Breast epithelium (tissue), 4 donors: ENCODE measurements at regions of chr1 and their contacts with region 1.

Region 1: DNA sequence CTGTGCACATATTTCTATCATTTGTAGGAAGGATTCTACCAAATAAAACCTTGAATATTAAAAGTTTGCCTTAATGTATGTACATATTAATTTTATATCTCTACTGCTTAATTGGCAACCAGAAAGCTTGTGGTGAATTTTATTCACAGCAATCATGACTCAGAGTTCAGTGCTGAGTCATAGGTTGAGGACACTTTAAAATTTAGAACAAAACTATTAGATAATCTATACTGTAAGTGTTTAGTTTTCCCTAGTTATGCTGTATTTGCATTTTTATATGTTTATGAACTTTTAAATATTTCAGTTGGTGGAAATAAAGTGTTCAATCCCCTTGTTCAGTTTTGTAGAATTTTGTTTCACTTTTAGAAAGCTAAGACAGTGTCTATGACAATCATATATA is 841.5 kb downstream of the KCNT2 start:
- DNase-seq: no peak
- H3K4me3 ChIP-seq: no peak overlapping the region
- H3K27ac ChIP-seq: no peak overlapping the region
- H3K4me1 ChIP-seq: no peaks in the 10 kb centered on the region
- H3K27me3 ChIP-seq: no peaks in the 10 kb centered on the region
- CTCF ChIP-seq: no peak
- POLR2A ChIP-seq: no peak

Region 2: GRCh38 chr1:196567238-196567637 is 800.5 kb after region 1 on chr1:
- intact Hi-C with region 1: loop called (anchors 5 kb)
- DNase-seq: no peak
- H3K4me3 ChIP-seq: no peak overlapping the region
- H3K27ac ChIP-seq: no peak overlapping the region
- H3K4me1 ChIP-seq: no peaks in the 10 kb centered on the region
- H3K27me3 ChIP-seq: no peaks in the 10 kb centered on the region
- CTCF ChIP-seq: no peak
- POLR2A ChIP-seq: no peak